Naive thymus-derived CD4-positive, alpha-beta T cell (primary cell): ENCODE measurements at regions of chr10 and their contacts with region 1.

Region 1: DNA sequence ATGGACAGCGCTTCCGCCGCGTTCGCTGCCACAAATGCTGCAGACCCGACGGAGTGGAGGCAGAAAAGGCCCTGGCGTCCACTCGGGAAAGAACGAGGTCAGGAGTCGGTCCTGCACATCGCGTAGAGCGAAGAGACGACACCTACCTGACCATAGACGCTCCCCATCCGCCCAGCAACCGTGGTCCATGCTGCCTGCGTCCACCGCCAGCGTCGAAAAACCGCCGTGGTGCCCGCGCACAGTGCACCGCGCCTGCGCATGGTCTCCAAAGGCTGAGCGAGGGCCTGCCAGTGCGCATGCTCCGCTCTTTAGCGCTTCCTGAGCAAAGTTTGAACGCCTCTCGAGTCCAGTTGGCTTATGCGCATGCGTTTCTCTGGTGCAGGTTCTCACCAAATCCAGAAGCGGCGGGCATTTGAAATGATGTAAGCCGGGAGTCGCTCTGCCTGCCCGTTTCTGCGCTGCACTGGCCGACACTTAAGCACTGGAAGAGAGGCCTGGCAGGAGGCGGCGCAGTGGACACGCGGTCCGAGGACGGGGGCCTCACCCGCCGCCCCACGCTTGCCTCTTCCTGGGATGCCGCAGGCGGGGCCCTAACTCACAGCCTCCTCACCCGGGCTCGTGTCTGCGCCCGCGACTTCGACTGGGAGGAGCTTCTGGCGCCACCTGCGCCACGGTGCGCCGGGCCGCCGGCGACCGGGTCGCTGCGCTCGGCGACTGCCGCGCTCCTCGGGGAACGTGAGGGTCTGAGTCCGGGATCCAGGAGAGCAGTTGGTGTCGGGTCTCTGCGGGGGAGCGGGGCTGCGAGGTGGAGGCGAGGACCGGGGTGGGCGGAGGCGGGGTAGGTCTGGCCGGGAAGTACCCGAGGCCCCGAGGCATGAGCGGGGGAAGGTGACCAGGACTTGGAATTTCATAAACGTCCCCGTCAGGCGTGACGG is at the start of gene FAM24B:
- DNase-seq: peak; percentile 84 to 96 (median 94)
- ATAC-seq: peak; percentile 93
- H3K4me3 ChIP-seq: peak within 1 kb of the TSS; percentile 81
- H3K4me3 Mint-ChIP-seq: peak within 1 kb of the TSS; percentile 86 to 99 (median 92)
- H3K27ac ChIP-seq: peak within 1 kb of the TSS; percentile 77
- H3K27ac Mint-ChIP-seq: peak within 1 kb of the TSS; percentile 85 to 96 (median 92)
- H3K4me1 ChIP-seq: peaks cover 18 to 21% of the 10 kb centered on the region in 2 donors
- H3K4me1 Mint-ChIP-seq: peaks cover 31 to 65% (median 54%) of the 10 kb centered on the region in 7 donors
- H3K27me3 ChIP-seq: no peaks in the 10 kb centered on the region
- H3K27me3 Mint-ChIP-seq: no peaks in the 10 kb centered on the region
- total RNA-seq, gene FAM24B: 9.9 to 13.5 (median 11.4) TPM

Region 2: DNA sequence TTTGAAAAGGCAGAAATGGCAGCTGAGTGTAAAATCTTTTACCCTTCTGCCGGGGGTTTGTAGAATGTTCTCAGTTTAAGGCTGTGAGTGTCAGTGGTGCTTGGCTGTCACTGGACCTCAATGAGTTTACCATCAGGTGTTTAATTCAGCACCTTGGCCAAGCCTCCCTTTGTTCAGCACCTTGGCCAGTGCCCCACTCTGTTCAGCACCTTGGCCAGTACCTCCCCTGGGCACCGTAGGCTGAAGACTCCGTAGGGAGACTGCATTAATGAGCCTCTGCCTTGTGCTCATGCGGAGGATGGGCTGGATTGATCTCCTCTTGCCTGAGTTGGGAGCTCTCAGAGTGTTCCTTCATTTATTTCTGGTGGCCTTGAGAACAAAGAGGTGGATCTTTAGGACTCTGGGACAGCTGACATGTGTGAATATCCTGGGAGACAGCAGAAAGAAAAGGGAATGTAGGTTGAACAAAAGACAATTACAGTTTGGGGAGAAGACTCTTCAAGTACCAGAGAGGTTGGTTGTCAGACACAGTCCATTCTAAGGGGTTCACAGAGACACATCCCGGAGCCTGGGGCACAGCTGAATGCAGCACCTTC is 32.4 kb after region 1 on chr10:
- CTCF ChIA-PET with region 1: no interaction called
- POLR2A ChIA-PET with region 1: no interaction called
- intact Hi-C with region 1: loop called in 1 of 2 experiments (anchors 1 kb)
- DNase-seq: peak; percentile 13 to 69 (median 40)
- ATAC-seq: peak; percentile 83
- H3K4me3 ChIP-seq: no peak overlapping the region
- H3K4me3 Mint-ChIP-seq: no peak overlapping the region
- H3K27ac ChIP-seq: no peak overlapping the region
- H3K27ac Mint-ChIP-seq: no peak overlapping the region
- H3K4me1 ChIP-seq: no peaks in the 10 kb centered on the region
- H3K4me1 Mint-ChIP-seq: no peaks in the 10 kb centered on the region
- H3K27me3 ChIP-seq: no peaks in the 10 kb centered on the region
- H3K27me3 Mint-ChIP-seq: peaks cover 5 to 15% (median 12%) of the 10 kb centered on the region in 5 donors

Region 3: GRCh38 chr10:122953827-122954730 is 74.5 kb after region 1 on chr10 and contains the start of gene C10orf88:
- CTCF ChIA-PET with region 1: interaction called, 3 read pairs
- POLR2A ChIA-PET with region 1: interaction called, 4 read pairs
- intact Hi-C with region 1: loop called (anchors 1 kb)
- DNase-seq: peak; percentile 92 to 98 (median 97)
- ATAC-seq: peak; percentile 97
- H3K4me3 ChIP-seq: peak within 1 kb of the TSS; percentile 69
- H3K4me3 Mint-ChIP-seq: peak within 1 kb of the TSS; percentile 85 to 96 (median 90)
- H3K27ac ChIP-seq: peak within 1 kb of the TSS; percentile 72
- H3K27ac Mint-ChIP-seq: peak within 1 kb of the TSS; percentile 77 to 98 (median 90)
- H3K4me1 ChIP-seq: peaks cover 16% of the 10 kb centered on the region in 2 donors
- H3K4me1 Mint-ChIP-seq: peaks cover 26 to 60% (median 39%) of the 10 kb centered on the region in 7 donors
- H3K27me3 ChIP-seq: no peaks in the 10 kb centered on the region
- H3K27me3 Mint-ChIP-seq: peaks cover 0 to 14% (median 0%) of the 10 kb centered on the region in 5 donors
- total RNA-seq, gene C10orf88: 5.2 to 16.8 (median 12.5) TPM

Region 4: DNA sequence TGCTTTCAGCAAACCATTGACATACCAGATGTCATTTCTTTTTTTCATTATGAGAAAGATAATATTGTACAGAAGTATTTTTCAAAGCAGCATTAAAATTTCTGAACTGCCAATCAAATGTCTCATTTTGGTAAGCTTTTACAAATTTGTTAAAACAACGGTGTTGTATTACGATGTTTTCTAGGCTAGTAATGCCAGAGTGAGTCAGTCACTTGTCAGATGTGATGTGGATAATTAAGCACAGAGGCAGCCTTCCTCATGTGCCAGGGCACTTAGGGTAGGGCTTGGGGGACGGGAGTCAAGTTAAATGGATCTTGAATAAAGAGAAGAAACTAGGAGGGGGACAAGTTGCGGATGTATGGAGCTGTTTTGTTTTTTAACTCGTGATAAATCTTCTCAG is 110.7 kb after region 1 on chr10:
- CTCF ChIA-PET with region 1: no interaction called
- POLR2A ChIA-PET with region 1: no interaction called
- intact Hi-C with region 1: no loop called
- DNase-seq: no peak
- ATAC-seq: no peak
- H3K4me3 ChIP-seq: no peak overlapping the region
- H3K4me3 Mint-ChIP-seq: no peak overlapping the region
- H3K27ac ChIP-seq: no peak overlapping the region
- H3K27ac Mint-ChIP-seq: peak overlapping the region in 4 of 9 donors; percentile 3 to 76 (median 28)
- H3K4me1 ChIP-seq: no peaks in the 10 kb centered on the region
- H3K4me1 Mint-ChIP-seq: peaks cover 0 to 3% (median 0%) of the 10 kb centered on the region in 7 donors
- H3K27me3 ChIP-seq: no peaks in the 10 kb centered on the region
- H3K27me3 Mint-ChIP-seq: no peaks in the 10 kb centered on the region